ENCODE measurements at regions of chr16 and their contacts with region 1.

Region 1: DNA sequence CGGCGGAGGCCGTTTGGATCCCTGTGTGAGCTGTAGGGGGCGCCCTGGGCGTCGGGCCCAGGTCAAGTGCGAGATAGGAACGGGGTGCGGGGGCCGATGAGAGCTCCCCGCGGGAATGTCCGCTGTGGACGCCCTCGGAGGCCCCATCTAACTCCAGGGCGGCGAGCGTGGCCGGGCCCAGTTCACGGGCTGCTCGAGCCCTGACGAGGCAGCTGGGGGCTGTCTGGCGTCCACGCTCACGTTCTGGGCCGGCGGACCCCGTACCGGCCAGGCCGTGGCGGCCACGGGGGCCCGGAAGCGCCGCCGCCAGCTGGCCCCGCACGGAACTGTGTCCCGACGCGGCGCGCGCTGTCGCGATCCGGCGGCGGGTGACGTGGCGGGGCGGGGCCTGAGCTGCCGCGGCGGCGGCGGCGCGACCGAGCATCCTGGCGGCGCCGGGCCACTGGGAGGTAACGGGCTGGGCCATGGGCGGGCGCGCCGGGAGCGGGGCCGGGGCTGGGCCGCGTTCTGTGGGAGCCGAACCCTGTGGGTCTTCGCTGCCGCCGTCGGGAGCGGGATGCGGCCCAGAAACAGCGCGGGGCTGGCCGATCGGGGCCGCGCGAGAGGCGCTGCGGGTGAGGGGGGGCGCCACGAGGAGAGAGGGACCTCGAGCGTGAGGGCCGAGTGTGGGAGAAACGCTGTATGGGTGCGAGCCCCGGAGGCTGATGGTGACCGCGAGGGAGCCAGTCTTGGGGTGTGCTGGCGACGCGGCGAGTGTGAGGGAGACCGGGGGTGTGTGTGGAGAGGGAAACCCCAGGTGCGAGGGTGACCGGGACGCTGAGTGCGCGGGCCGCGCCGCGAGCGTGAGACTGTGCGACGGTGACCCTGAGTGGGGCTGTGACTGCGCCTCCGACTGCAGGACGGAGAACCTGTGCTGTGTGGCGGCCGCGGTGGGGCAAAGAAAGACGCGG is at the start of gene SLC7A6:
- DNase-seq: peak; percentile 84 to 94
- ATAC-seq: peak; percentile 72 to 73
- H3K4me3 ChIP-seq: peak within 1 kb of the TSS; percentile 85
- H3K27ac ChIP-seq: peak within 1 kb of the TSS; percentile 94 to 97
- H3K4me1 ChIP-seq: peaks cover 41% of the 10 kb centered on the region
- CTCF ChIP-seq: peak; percentile 81
- EP300 ChIP-seq: no peak; a peak in 1 of 5 replicates
- POLR2A ChIP-seq: peak; percentile 79
- RAD21 ChIP-seq: peak; percentile 14 to 40; a peak in 2 of 5 replicates
- polyA plus RNA-seq, gene SLC7A6: 32.9 and 45.3 TPM in 2 replicates

Region 2: DNA sequence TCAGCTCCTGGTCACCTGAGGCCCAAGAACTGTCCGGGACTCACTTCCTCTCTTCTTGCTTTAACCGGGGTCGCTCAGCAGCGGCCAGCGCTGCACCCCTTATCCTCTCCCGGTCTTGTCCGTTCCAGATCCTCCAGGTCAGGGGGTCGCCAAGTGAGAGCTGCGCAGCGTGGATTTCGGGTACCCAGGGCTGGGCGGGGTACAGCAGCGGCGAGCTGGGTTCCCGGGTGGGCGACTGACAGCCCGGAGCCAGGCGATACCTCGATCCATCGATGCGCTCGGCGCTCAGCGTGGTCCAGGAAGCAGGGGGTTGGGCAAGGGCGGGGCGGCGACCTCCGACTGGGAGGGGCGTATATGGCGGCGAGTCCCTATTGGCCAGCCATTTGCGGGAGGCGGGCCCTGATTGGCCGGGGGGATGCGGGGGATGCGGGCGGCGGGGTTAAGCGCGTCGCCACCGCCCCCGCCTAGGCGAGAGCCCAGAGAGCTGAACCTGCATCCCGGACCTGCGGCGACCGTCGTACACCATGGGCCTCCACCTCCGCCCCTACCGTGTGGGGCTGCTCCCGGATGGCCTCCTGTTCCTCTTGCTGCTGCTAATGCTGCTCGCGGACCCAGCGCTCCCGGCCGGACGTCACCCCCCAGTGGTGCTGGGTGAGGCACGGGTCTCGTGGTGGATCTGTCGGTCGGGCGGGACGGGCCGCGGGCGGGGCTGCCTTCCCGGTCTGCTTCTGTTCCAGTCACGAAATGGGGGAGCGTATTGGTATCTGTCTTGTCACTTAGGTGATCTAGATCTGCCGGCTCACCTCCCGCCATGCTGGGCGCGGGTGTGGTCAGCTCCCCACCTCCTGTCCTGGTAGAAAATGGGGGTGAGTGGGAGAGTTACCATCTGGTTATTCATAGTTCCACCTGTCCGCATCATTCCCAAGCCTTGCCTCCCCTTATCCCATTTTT is 19.2 kb before region 1 on chr16 and contains the start of gene PLA2G15:
- CTCF ChIA-PET with region 1: interaction called, 124 read pairs
- POLR2A ChIA-PET with region 1: interaction called, 6 read pairs
- DNase-seq: peak; percentile 89 to 95
- ATAC-seq: peak; percentile 92 to 96
- H3K4me3 ChIP-seq: peak within 1 kb of the TSS; percentile 75
- H3K27ac ChIP-seq: peak within 1 kb of the TSS; percentile 69 to 87
- H3K4me1 ChIP-seq: peaks cover 12% of the 10 kb centered on the region; the same call in 2 of the 3 replicates
- CTCF ChIP-seq: no peak
- EP300 ChIP-seq: no peak
- POLR2A ChIP-seq: peak; percentile 55
- RAD21 ChIP-seq: no peak
- polyA plus RNA-seq, gene PLA2G15: 4.8 and 5.7 TPM in 2 replicates

Region 3: DNA sequence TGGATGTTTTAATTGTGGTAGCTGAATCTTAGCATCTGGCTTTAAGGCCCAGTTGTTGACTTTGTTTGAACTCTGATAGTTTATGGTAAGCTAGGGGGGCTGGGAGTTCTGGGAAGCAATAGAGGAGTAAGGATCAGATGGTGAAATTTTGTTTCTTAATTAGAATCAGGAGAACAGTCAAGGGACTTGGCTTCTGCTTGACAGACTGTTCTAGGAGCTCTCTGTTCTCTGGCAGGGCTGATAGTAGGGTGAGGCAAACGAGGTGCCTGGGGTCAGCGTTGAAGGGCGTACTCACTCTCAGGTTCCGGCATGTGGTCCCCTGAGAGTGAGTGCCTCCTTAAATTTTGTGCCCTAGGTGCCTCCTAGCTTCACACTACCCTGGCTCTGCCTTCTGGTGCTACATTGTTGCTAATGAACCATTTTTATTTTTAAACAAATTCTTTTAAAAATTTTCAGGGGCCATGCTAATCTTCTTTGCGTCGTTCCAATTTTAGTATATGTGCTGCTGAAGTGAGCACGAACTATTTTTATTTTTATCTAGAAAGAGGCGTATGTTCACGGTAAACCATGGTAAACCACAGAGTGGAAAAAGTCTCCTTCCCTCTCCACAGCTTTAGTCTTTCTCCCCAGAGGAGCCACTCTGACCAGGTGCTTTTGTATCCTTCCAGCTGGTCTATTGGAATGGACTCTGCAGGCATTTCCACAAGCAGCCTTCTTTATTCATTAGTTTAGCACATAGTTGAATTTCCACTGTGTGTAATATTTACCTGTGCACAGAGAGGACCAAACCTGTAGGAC is 19.6 kb after region 1 on chr16:
- CTCF ChIA-PET with region 1: interaction called, 35 read pairs
- POLR2A ChIA-PET with region 1: interaction called, 7 read pairs
- DNase-seq: no peak
- ATAC-seq: no peak
- H3K4me3 ChIP-seq: no peak overlapping the region
- H3K27ac ChIP-seq: no peak overlapping the region
- H3K4me1 ChIP-seq: peaks cover 15% of the 10 kb centered on the region
- CTCF ChIP-seq: no peak
- EP300 ChIP-seq: no peak
- POLR2A ChIP-seq: no peak
- RAD21 ChIP-seq: no peak

Region 4: GRCh38 chr16:68298907-68299561 is 34.6 kb after region 1 on chr16:
- CTCF ChIA-PET with region 1: interaction called, 42 read pairs
- POLR2A ChIA-PET with region 1: interaction called, 9 read pairs
- DNase-seq: no peak
- ATAC-seq: peak in 1 of 2 experiments; percentile 13; a peak in 2 of 6 replicates
- H3K4me3 ChIP-seq: no peak overlapping the region
- H3K27ac ChIP-seq: no peak overlapping the region
- H3K4me1 ChIP-seq: peaks cover 13% of the 10 kb centered on the region; the same call in 2 of the 3 replicates
- CTCF ChIP-seq: no peak
- EP300 ChIP-seq: no peak
- POLR2A ChIP-seq: no peak
- RAD21 ChIP-seq: no peak

Region 5: DNA sequence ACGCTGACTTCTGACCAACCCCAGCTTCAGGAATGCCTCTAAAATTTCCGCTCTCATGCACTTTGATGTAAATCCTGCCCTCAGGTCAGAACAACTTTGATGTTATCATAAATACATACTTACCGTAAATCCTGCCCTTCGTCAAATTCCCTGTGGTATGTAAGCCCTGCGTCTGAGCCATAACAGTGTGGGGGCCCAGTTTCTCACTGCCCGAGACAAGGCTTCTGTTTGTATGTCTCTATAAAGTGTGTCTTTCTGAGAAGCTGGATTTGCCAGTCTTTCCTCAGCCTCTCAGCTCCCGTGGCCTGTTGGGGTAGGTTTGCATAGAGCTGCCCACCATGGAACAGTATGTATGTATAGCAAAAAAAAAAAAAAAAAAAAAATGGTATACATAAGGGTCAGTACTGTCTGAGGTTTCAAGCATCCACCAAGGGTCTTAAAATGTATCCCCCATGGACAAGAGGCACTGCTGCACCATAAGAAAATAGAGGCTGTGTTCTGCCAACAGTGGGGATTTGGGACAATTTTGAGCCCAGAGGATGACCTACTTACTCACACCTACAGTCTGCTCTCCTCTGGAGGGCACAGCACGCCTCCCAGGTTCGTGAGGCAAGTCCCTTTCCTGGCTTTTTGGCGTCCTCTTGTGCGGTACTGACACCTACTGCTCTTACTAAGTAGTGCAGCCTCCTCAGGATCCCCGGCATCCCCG is 63.9 kb after region 1 on chr16:
- CTCF ChIA-PET with region 1: interaction called, 335 read pairs
- POLR2A ChIA-PET with region 1: interaction called, 6 read pairs
- DNase-seq: peak; percentile 88 to 90
- ATAC-seq: peak; percentile 98 to 99
- H3K4me3 ChIP-seq: no peak overlapping the region
- H3K27ac ChIP-seq: no peak overlapping the region
- H3K4me1 ChIP-seq: peaks cover 5% of the 10 kb centered on the region; the same call in 1 of the 3 replicates
- CTCF ChIP-seq: peak; percentile 88
- EP300 ChIP-seq: no peak
- POLR2A ChIP-seq: no peak
- RAD21 ChIP-seq: peak; percentile 89 to 94

Measured in A549 (cell line).